IMR-90 (cell line): ENCODE measurements at regions of chr4 and their contacts with region 1.

Region 1: DNA sequence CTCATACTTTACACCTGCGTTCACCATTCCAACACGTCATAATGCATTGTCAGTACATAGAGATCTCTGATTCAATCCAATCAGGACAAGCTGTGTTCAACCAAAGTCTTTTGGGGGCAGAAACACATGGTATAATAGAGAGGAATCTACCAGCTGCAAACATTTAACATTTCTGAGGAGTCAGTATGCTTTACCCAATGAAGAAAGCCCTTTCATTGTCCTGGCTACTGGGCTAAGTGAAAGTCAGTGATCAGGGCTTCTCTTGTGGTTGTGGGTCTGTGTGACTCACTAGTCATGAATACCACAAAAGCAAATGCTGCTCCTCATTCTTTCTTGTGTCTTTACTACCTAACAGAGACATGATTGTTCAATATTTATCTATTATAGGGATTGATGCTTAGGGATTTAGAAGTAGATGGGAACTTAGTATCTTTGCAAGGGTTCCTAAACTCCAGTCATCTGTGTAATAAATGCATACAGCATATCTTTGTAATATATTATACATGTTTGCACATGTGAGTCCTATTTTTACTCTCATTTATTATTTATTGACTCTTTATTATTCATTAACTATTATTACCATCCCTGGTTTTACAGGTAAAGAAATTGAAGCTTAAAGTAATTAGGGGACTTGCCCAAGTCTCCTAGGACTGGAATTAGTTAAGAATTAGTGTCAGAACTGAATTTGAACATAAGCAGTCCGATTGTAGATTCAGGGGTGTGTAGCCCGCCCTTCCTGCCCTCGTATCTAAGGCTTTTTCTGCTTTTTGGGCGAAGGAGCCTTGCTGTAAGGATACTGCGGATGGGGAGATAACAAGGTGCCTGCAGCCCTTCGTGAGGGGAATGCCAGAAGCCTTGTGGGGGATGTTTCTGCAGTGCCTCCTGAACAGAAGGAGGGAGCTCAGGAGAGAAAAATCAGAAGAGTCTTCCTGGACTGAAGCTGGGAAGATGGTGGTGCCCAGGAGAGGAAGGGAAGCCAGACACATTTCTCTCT is 353.1 kb upstream of the BOD1L1 start:
- DNase-seq: peak; percentile 96
- ATAC-seq: peak; percentile 96
- H3K4me3 ChIP-seq: no peak overlapping the region
- H3K27ac ChIP-seq: no peak overlapping the region
- H3K4me1 ChIP-seq: peaks cover 8% of the 10 kb centered on the region
- H3K27me3 ChIP-seq: peaks cover 9% of the 10 kb centered on the region
- CTCF ChIP-seq: no peak
- POLR2A ChIP-seq: no peak
- RAD21 ChIP-seq: no peak; the same call in 1 of the 2 replicates

Region 2: DNA sequence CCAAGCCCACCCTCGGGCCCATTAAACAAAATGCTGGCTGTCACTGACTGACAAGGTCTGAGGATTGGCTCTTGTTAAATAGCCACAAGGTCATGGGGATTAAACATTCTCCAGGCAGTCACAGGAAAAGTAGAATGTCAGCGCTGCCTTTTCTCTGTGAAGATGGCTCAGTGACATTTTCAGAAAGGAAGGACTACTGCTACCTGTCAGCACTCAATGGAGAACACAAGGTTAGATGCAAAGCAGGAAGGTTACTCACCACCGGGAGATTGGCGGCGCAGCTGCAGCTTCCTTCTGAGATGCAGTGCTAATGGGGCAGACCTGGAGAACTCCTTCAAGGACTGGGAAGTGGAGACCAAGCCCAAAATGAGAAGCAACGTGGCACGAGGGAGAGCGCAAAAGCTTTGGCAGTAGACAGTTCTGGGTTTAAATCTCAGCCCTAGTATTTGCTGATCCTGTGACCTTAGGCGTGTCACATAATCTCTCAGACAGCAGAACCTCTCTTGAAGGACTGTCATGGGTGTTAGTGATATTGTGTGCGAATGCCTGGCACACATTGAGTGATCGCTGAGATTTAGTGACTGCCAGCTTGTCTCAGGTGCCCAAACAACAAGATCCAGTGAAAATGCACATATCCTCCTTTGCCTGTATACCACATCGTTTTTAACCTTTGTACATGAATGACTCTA is 140.0 kb before region 1 on chr4:
- CTCF ChIA-PET with region 1: no interaction called
- POLR2A ChIA-PET with region 1: no interaction called
- dilution Hi-C with region 1: no loop called
- in situ Hi-C with region 1: no loop called
- intact Hi-C with region 1: no loop called
- DNase-seq: no peak
- ATAC-seq: no peak
- H3K4me3 ChIP-seq: no peak overlapping the region
- H3K27ac ChIP-seq: no peak overlapping the region
- H3K4me1 ChIP-seq: no peaks in the 10 kb centered on the region
- H3K27me3 ChIP-seq: no peaks in the 10 kb centered on the region
- CTCF ChIP-seq: no peak
- POLR2A ChIP-seq: no peak
- RAD21 ChIP-seq: no peak

Region 3: DNA sequence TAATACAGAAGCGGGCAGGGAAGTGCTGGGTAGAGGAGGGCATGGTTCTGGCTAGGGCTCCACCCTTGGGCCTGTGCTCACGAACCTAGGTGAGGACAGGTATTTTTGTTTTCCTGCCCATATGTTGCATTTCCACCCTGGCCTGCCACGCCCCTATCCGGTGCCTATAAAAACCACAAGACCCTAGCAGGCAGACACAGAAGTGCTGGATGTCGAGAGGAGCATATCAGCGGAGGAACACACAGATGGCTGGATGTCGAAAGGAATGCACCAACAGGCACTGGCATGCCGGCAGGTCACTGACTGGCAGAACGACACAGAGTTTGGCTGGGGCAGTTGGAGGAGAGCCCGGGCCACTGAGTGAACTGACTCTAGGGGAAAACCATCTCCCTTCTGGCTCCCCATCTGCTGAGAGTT is 36.5 kb before region 1 on chr4:
- CTCF ChIA-PET with region 1: no interaction called
- POLR2A ChIA-PET with region 1: no interaction called
- dilution Hi-C with region 1: no loop called
- in situ Hi-C with region 1: no loop called
- intact Hi-C with region 1: no loop called
- DNase-seq: no peak
- ATAC-seq: no peak
- H3K4me3 ChIP-seq: no peak overlapping the region
- H3K27ac ChIP-seq: no peak overlapping the region
- H3K4me1 ChIP-seq: no peaks in the 10 kb centered on the region
- H3K27me3 ChIP-seq: no peaks in the 10 kb centered on the region
- CTCF ChIP-seq: no peak
- POLR2A ChIP-seq: no peak
- RAD21 ChIP-seq: no peak

Region 4: DNA sequence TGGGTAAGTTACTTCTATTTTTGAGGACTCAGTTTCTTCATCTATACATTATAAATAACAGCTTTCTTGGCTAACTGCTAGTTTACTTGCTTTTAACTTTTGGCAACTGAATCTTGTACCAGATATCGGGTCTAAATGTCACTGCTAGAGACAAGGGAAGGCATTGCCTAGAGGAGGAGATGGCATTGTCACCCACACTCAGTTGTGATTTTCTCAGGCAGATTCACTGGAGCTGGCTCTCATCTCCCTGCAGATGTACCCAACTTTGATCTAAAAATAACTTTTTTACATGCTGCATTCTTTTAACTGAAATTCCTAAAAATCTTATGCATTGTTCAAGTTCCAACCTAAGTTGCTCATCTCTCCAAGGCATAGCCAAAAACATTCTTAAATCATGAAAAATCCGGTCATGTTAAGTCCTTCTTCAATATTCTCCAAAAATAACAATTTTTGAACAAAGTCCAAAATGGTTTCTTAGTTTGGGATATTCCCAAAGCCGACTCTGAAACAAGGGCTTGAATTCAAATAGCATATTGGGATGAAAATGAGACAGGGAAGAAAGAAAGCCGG is 115.9 kb after region 1 on chr4:
- CTCF ChIA-PET with region 1: no interaction called
- POLR2A ChIA-PET with region 1: no interaction called
- dilution Hi-C with region 1: no loop called
- in situ Hi-C with region 1: no loop called
- intact Hi-C with region 1: loop called (anchors 10 kb)
- DNase-seq: peak; percentile 81
- ATAC-seq: peak; percentile 77
- H3K4me3 ChIP-seq: no peak overlapping the region
- H3K27ac ChIP-seq: peak overlapping the region; percentile 46; the same call in 1 of the 2 replicates
- H3K4me1 ChIP-seq: peaks cover 7% of the 10 kb centered on the region
- H3K27me3 ChIP-seq: no peaks in the 10 kb centered on the region
- CTCF ChIP-seq: no peak
- POLR2A ChIP-seq: no peak
- RAD21 ChIP-seq: no peak